ENCODE measurements at regions of chr1 and their contacts with region 1.

Region 1: DNA sequence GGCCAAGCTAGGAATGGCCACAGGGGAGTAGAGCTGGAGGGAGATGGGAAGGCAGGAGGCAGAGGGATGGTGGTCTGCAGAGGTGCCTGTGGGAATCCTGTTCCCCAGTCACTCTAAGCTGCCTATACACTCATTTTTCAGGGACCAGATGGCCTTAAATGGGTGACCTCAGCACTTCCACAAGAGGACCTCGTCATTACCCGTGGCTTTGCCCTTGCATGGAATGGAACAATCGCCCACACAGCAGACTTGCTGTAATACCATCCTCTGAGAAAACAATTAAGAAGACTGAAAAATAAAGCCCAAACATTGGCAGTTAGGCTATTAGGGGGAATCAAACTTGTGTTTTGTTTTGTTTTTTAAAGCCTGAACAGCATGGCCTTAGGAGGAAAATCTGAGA is 12.9 kb upstream of the TNN start:
- DNase-seq: no peak
- H3K4me3 ChIP-seq: no peak overlapping the region
- H3K27ac ChIP-seq: no peak overlapping the region
- H3K4me1 ChIP-seq: no peaks in the 10 kb centered on the region
- H3K27me3 ChIP-seq: peaks cover under 1% of the 10 kb centered on the region
- CTCF ChIP-seq: no peak

Region 2: GRCh38 chr1:175237389-175237788 is 182.7 kb after region 1 on chr1:
- CTCF ChIA-PET with region 1: no interaction called
- POLR2A ChIA-PET with region 1: no interaction called
- intact Hi-C with region 1: no loop called
- DNase-seq: no peak
- H3K4me3 ChIP-seq: no peak overlapping the region
- H3K27ac ChIP-seq: no peak overlapping the region
- H3K4me1 ChIP-seq: no peaks in the 10 kb centered on the region
- H3K27me3 ChIP-seq: no peaks in the 10 kb centered on the region
- CTCF ChIP-seq: no peak

Region 3: GRCh38 chr1:175947771-175948170 is 893.0 kb after region 1 on chr1:
- CTCF ChIA-PET with region 1: no interaction called
- POLR2A ChIA-PET with region 1: no interaction called
- intact Hi-C with region 1: loop called (anchors 5 kb)
- DNase-seq: no peak
- H3K4me3 ChIP-seq: no peak overlapping the region
- H3K27ac ChIP-seq: no peak overlapping the region
- H3K4me1 ChIP-seq: no peaks in the 10 kb centered on the region
- H3K27me3 ChIP-seq: no peaks in the 10 kb centered on the region
- CTCF ChIP-seq: no peak